ENCODE measurements at regions of chr6 and their contacts with region 1.

Region 1: GRCh38 chr6:3251462-3252314 is 7.1 kb upstream of the PSMG4 start:
- DNase-seq: peak; percentile 90
- H3K4me3 ChIP-seq: no peak overlapping the region
- H3K27ac ChIP-seq: no peak overlapping the region
- H3K4me1 ChIP-seq: no peaks in the 10 kb centered on the region
- H3K27me3 ChIP-seq: no peaks in the 10 kb centered on the region
- CTCF ChIP-seq: peak; percentile 97

Region 2: GRCh38 chr6:3125815-3126214 is 125.9 kb before region 1 on chr6:
- CTCF ChIA-PET with region 1: no interaction called
- POLR2A ChIA-PET with region 1: no interaction called
- intact Hi-C with region 1: loop called (anchors 1 kb)
- DNase-seq: no peak
- H3K4me3 ChIP-seq: no peak overlapping the region
- H3K27ac ChIP-seq: no peak overlapping the region
- H3K4me1 ChIP-seq: no peaks in the 10 kb centered on the region
- H3K27me3 ChIP-seq: no peaks in the 10 kb centered on the region
- CTCF ChIP-seq: no peak

Region 3: GRCh38 chr6:3133515-3133914 is 118.2 kb before region 1 on chr6:
- CTCF ChIA-PET with region 1: interaction called, 11 read pairs
- POLR2A ChIA-PET with region 1: no interaction called
- intact Hi-C with region 1: no loop called
- DNase-seq: no peak
- H3K4me3 ChIP-seq: no peak overlapping the region
- H3K27ac ChIP-seq: no peak overlapping the region
- H3K4me1 ChIP-seq: peaks cover 3% of the 10 kb centered on the region
- H3K27me3 ChIP-seq: no peaks in the 10 kb centered on the region
- CTCF ChIP-seq: no peak

Region 4: GRCh38 chr6:3209114-3210023 is 42.3 kb before region 1 on chr6:
- CTCF ChIA-PET with region 1: no interaction called
- POLR2A ChIA-PET with region 1: no interaction called
- intact Hi-C with region 1: no loop called
- DNase-seq: peak; percentile 82
- H3K4me3 ChIP-seq: no peak overlapping the region
- H3K27ac ChIP-seq: no peak overlapping the region
- H3K4me1 ChIP-seq: peaks cover 9% of the 10 kb centered on the region
- H3K27me3 ChIP-seq: no peaks in the 10 kb centered on the region
- CTCF ChIP-seq: no peak

Measured in A673 (cell line).